Activated CD8-positive, alpha-beta memory T cell treated with anti-CD3 and anti-CD28 coated beads, Interleukin-2, amount 10 ng/mL, durations not matched to agents 7 days and 5 days (primary cell): ENCODE measurements at regions of chr20 and their contacts with region 1.

Region 1: DNA sequence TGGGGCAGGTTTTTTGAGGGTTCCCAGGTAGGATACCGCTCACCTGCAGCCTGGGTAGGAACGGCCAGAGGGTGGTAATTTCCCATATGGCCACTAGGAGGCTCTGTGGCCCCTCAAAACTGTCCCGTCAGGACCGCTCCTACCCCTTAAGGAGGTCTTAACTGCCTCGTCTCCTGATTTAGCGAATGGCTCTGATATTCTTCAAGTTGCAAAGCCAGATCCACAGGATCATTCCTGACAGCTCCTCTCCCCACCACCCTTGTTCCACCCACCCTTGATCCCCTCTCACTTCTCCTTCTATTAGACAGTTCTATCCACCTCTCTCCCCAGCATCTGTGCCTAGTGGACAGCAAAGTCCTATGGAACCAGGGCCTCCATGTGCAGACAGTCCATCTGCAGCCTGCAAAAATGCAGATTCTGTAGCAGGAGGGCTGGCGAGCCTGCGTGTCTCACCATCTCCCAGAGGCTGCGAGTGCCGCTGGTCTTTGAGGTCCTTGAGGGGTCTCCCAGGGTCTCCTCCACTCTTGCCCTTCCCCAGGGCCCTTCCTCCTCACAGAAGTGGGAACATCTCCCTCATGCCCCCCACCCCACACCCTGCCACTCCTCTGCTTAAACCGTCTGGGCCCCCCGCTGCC is 34.3 kb upstream of the ZBP1 start:
- DNase-seq: peak; percentile 70
- ATAC-seq: peak; percentile 81
- H3K4me3 Mint-ChIP-seq: no peak overlapping the region
- H3K27ac Mint-ChIP-seq: no peak overlapping the region
- H3K4me1 Mint-ChIP-seq: peaks cover 13% of the 10 kb centered on the region
- H3K27me3 Mint-ChIP-seq: peaks cover 2% of the 10 kb centered on the region

Region 2: DNA sequence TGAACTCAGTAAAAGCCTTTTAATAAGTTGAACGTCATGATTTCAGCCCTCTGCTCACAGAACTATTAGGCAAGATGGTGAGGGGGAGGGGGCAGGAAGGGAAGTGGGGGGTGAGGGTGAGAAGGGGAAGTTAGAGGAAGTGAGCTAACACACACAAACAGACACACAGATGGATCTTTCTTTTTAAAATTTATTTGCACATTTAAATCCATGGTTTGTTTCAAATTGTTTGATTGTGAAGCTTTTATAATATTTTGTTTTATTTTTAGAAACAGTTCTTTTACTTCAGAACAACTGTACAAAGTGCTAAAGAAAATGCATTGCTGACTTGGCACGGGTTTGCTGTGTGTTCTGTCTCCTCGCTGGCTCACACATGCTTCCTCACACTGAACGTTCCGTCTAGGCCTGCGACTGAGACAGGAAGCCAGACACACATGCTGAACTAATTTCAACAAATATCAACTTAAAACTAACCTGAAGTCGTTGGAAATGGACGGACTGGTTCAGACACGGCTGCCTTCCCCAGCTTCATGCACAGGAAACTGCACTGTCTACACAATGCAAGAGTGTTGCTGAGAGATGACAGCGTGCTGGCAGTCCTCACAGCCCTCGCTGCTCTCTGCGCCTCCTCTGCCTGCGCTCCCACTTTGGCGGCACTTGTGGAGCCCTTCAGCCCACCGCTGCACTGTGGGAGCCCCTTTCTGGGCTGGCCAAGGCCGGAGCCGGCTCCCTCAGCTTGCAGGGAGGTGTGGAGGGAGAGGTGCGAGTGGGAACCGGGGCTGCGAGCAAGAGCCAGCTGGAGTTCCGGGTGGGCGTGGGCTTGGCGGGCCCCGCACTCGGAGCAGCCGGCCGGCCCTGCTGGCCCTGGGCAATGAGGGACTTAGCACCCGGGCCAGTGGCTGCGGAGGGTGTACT is 26.2 kb before region 1 on chr20:
- CTCF ChIA-PET with region 1: interaction called, 120 read pairs
- DNase-seq: peak; percentile 76
- ATAC-seq: peak; percentile 89
- H3K4me3 Mint-ChIP-seq: peak overlapping the region; percentile 66
- H3K27ac Mint-ChIP-seq: peak overlapping the region; percentile 99
- H3K4me1 Mint-ChIP-seq: peaks cover 47% of the 10 kb centered on the region
- H3K27me3 Mint-ChIP-seq: peaks cover 28% of the 10 kb centered on the region